ENCODE measurements at regions of chrX and their contacts with region 1.

Region 1: DNA sequence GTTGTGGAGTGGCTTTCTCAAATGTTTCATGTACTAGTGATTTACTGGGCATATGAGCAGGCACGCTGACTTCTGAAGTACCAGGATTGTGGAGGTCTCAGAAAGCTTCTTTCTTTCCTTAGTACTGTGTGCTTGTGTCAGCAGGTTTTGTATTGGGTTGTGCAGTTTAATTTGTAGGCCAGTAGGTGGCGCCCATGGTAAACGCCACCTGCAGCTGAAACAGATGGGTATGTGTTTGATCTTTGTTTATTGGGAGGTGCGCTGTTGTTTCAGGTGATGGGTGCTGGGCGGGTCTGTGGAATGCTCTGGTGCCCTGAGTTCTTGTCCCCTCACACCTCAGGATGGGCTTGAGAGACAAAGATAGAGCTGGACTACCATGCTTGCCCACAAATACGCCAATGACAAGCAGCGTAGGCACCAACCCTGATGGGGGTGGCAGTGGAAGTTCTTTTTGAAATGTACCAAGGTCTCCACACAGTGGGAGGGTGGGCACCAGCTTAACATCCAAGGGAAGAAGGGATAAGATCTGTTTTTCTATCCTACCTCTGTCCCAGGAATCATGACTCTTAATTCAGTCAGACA is 141.5 kb downstream of the RPS6KA6 start:
- DNase-seq: peak; percentile 57
- ATAC-seq: peak; percentile 74
- H3K4me3 ChIP-seq: no peak overlapping the region
- H3K27ac ChIP-seq: no peak overlapping the region
- H3K4me1 ChIP-seq: peaks cover 7% of the 10 kb centered on the region; the same call in 1 of the 2 replicates
- H3K27me3 ChIP-seq: no peaks in the 10 kb centered on the region
- CTCF ChIP-seq: peak; percentile 83

Region 2: DNA sequence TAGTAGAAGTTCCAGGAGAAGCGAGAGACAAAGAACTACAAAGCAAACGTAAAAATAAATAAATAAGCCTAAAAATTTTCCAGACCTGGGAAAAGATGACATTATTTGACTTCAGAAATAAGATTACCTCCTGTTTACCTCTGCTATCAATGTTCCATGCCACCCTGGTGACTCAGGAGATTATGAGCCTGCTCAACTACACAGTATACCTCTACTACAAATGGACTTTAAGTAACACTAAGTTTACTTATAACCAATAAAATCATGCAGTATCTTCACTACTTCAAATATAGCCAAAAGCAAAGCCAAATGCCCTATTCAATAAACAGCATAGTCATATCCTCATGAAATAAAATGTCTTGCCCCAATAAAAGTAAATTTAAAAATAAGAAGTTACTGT is 80.1 kb before region 1 on chrX:
- CTCF ChIA-PET with region 1: no interaction called
- POLR2A ChIA-PET with region 1: no interaction called
- intact Hi-C with region 1: loop called (anchors 1 kb)
- DNase-seq: peak; percentile 34
- ATAC-seq: peak; percentile 97
- H3K4me3 ChIP-seq: no peak overlapping the region
- H3K27ac ChIP-seq: no peak overlapping the region
- H3K4me1 ChIP-seq: no peaks in the 10 kb centered on the region
- H3K27me3 ChIP-seq: no peaks in the 10 kb centered on the region
- CTCF ChIP-seq: no peak

Region 3: DNA sequence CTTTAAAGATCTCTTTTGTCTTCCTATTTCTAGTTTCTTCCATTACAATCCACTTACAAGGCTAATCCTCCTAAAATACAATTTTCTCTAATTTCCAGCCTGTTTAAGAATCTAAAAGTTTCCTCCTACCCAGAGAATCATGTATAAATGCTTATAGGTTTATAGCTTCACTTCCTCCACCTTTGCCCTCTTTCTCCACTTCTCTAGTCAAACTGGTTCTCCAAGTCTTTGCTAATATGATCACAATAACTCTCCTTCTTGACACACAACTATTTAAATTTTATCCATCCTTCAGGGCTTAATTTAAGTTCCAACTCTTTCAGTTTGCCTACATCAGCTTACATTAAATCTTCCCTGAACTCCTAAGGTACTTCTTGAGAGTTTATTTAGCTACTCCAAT is 72.3 kb after region 1 on chrX:
- CTCF ChIA-PET with region 1: no interaction called
- POLR2A ChIA-PET with region 1: no interaction called
- intact Hi-C with region 1: loop called (anchors 2 kb)
- DNase-seq: peak; percentile 78
- ATAC-seq: peak; percentile 64
- H3K4me3 ChIP-seq: peak overlapping the region; percentile 56; the same call in 1 of the 2 replicates
- H3K27ac ChIP-seq: peak overlapping the region; percentile 58
- H3K4me1 ChIP-seq: peaks cover 19% of the 10 kb centered on the region
- H3K27me3 ChIP-seq: no peaks in the 10 kb centered on the region
- CTCF ChIP-seq: no peak

Region 4: GRCh38 chrX:84168095-84168494 is 121.6 kb after region 1 on chrX:
- CTCF ChIA-PET with region 1: no interaction called
- POLR2A ChIA-PET with region 1: interaction called, 12 read pairs
- intact Hi-C with region 1: no loop called
- DNase-seq: peak; percentile 82
- ATAC-seq: peak; percentile 90
- H3K4me3 ChIP-seq: peak overlapping the region; percentile 22
- H3K27ac ChIP-seq: peak overlapping the region; percentile 94
- H3K4me1 ChIP-seq: peaks cover 34% of the 10 kb centered on the region
- H3K27me3 ChIP-seq: no peaks in the 10 kb centered on the region
- CTCF ChIP-seq: no peak

Region 5: DNA sequence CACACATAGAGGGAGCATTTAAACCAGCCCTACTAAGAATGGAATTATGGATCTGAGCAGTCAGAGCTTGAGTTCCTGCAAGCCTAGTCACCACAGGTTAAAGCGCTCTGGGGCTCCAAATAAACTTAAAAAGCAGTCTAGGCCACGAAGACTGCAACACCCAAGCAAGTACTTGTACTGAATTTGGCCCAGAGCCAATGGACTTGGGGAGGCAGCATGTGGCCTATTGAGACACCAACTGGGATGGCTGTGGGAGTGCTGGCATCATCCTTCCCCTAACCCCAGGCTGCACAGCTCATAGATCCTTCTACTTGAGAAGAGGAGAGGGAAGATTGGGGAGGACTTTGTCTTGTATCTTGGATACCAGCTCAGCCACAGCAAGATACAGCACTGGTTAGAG is 252.9 kb after region 1 on chrX:
- CTCF ChIA-PET with region 1: no interaction called
- POLR2A ChIA-PET with region 1: no interaction called
- intact Hi-C with region 1: loop called (anchors 2 kb)
- DNase-seq: no peak
- ATAC-seq: no peak
- H3K4me3 ChIP-seq: no peak overlapping the region
- H3K27ac ChIP-seq: no peak overlapping the region
- H3K4me1 ChIP-seq: no peaks in the 10 kb centered on the region
- H3K27me3 ChIP-seq: no peaks in the 10 kb centered on the region
- CTCF ChIP-seq: no peak

Region 6: GRCh38 chrX:84893897-84894296 is 847.4 kb after region 1 on chrX:
- CTCF ChIA-PET with region 1: no interaction called
- POLR2A ChIA-PET with region 1: no interaction called
- intact Hi-C with region 1: no loop called
- DNase-seq: no peak
- ATAC-seq: no peak
- H3K4me3 ChIP-seq: no peak overlapping the region
- H3K27ac ChIP-seq: no peak overlapping the region
- H3K4me1 ChIP-seq: no peaks in the 10 kb centered on the region
- H3K27me3 ChIP-seq: no peaks in the 10 kb centered on the region
- CTCF ChIP-seq: no peak